ENCODE measurements at regions of chr2 and their contacts with region 1.

Region 1: DNA sequence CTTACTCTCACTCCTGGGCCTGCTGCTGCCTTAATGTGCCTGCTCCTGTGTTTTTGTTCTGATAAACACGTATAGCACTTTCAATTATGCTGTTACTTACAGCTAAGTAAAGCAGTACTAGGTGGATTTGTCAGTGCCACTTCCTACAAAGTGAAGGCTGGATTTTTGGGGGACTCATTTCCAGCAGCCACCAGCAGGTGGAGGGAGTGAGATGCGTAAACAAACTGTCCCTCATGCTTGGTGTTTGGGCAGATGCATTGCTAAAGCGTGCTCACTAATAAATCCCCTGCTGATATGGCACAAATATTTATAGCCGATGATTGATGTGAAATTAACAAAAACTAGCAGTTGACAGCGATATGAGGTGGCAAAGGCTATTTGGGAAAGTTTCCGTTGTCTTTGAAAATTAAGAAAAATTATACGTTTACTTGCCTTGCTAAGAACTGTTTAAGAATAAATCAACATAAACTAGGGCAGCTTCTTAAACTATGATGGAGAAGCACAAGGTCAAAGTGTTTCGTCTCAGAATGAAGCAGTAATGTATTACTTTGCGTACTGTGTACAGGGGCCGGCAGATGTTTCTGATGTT is 101.7 kb downstream of the AGAP1 start:
- DNase-seq: peak; percentile 17
- H3K4me3 Mint-ChIP-seq: no peak overlapping the region
- H3K27ac Mint-ChIP-seq: no peak overlapping the region
- H3K4me1 Mint-ChIP-seq: no peaks in the 10 kb centered on the region
- H3K27me3 Mint-ChIP-seq: no peaks in the 10 kb centered on the region

Region 2: DNA sequence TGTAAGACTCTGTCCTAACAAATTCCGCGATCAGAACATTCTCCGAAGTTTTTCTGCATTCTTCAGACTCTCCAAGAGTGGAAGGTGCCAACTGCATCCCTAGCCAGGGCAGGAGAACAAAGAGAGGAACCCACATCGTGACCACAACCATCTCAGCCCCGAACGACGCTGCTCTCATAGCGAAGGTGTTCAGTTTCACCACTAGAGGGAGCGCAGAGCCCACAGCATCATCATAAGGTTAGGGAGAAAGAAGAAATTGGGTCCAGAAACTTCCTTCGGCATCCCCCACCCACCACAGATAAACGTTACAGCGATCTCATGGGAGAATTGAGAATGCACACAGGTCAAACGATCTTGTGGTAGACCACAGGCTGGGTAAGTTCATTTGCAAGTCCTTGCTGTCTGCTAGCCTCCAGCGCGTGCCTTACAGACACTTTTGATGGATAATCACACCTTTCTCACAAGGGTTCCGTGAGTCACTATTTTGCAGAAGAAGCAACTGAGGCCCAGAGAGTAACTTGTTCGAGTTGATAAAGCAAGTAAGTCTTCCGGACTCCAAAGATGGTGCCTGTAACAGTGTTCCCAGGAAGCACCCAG is 1044.9 kb before region 1 on chr2:
- intact Hi-C with region 1: loop called (anchors 5 kb)
- DNase-seq: peak; percentile 36
- H3K4me3 Mint-ChIP-seq: no peak overlapping the region
- H3K27ac Mint-ChIP-seq: no peak overlapping the region
- H3K4me1 Mint-ChIP-seq: peaks cover 3% of the 10 kb centered on the region
- H3K27me3 Mint-ChIP-seq: peaks cover 32% of the 10 kb centered on the region

Region 3: GRCh38 chr2:235135990-235136561 is 459.4 kb before region 1 on chr2:
- intact Hi-C with region 1: loop called (anchors 2 kb)
- DNase-seq: peak; percentile 14
- H3K4me3 Mint-ChIP-seq: no peak overlapping the region
- H3K27ac Mint-ChIP-seq: no peak overlapping the region
- H3K4me1 Mint-ChIP-seq: peaks cover 2% of the 10 kb centered on the region
- H3K27me3 Mint-ChIP-seq: peaks cover 6% of the 10 kb centered on the region

Region 4: DNA sequence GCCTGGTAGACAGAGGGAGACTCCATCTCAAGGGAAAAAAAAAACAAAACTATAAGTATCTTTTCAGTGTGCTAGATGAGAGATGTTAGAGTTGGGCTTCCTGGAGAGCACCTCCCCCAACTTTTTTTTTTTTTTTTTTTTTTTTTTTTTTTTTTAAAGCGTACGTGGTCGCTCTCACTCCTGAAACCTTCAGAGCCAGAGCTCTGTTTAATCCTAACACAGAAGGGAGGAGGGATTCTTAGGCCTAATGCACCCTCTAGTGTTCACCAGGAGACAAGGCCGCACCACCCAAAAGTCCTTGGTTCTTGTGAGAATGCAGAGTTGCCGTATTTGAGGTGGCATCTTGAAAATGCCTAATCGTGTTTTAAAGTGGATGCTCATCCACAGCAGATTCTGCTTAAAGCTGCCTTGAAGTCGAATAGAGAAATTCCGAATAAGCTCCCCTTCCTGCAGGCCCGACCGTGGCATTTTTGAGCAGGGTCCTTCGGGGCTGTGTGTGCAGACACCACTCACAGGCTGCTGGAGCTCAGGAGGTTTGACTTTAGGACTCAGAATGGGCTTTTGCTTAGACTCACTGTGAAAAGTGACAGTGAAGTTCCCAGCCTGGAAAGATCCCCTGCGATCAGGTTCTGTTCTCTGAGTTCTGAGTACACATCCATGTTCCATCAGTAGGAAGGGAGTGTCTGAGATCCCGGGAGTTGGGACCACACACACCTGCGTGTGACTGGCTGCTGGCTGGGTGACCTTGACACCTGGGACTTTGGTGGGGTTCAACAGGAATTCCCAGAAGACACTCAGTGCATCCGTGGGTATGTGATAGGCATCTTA is 151.0 kb after region 1 on chr2:
- intact Hi-C with region 1: loop called (anchors 1 kb)
- DNase-seq: peak; percentile 22
- H3K4me3 Mint-ChIP-seq: no peak overlapping the region
- H3K27ac Mint-ChIP-seq: no peak overlapping the region
- H3K4me1 Mint-ChIP-seq: no peaks in the 10 kb centered on the region
- H3K27me3 Mint-ChIP-seq: peaks cover 2% of the 10 kb centered on the region

Measured in activated T-helper 2 cell treated with anti-CD3 and anti-CD28 coated beads, Interferon-gamma antibody, Interleukin-2, Interleukin-4, amounts not matched to agents 10 μg/mL and 5 μg/mL and 100 μg/mL, durations not matched to agents 14 hours and 24 hours and 36 hours (primary cell).